ENCODE measurements at regions of chr5 and their contacts with region 1.

Region 1: DNA sequence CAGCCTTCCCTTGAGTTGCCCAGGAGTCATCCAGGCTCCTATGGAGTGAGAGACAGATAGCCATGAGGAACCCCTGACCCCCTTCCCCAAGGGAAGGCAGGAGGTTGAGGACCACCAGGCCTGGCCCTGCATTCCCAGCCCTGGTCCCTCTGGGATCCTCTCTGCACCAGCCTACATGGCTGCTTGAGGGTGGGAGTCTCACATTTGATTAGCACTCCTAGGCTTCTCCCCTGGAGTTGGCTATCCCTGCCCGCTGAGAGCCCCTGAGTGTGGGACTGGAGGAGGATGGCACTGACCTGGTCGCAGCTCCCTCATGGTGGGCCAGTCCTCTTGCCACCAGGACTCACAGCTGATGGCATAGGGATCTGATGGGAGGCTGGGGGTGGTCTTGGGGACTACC is 46.7 kb downstream of the SAR1B start:
- DNase-seq: no peak
- H3K4me3 ChIP-seq: no peak overlapping the region
- H3K27ac ChIP-seq: no peak overlapping the region
- H3K4me1 ChIP-seq: peaks cover 5 to 25% (median 9%) of the 10 kb centered on the region in 6 donors
- H3K27me3 ChIP-seq: no peaks in the 10 kb centered on the region
- CTCF ChIP-seq: no peak
- POLR2A ChIP-seq: no peak

Region 2: DNA sequence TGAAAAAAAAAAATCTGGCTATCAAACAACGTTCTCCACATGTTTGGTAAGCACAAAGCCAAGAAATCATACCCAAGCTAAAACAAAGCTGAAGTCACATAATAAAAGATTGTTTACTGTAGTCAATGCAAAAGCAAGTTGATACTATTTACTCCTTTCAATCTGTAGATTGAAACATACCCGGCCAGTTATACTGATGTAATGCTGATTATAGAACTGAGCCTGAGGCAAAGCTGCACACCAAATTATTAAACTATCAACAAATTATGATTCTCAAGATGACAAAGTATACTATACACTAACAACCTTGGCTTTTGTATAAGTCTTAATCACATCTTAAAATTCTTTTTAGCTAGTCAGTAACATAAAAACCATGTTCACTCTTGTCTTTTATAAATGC is 363.4 kb before region 1 on chr5:
- intact Hi-C with region 1: no loop called
- DNase-seq: no peak
- H3K4me3 ChIP-seq: peak overlapping the region in 2 of 8 donors; percentile 5 to 81
- H3K27ac ChIP-seq: peak overlapping the region in 3 of 8 donors; percentile 8 to 24 (median 13)
- H3K4me1 ChIP-seq: peaks cover 65 to 87% (median 84%) of the 10 kb centered on the region in 6 donors
- H3K27me3 ChIP-seq: no peaks in the 10 kb centered on the region
- CTCF ChIP-seq: no peak
- POLR2A ChIP-seq: no peak

Region 3: GRCh38 chr5:134304311-134304710 is 281.7 kb before region 1 on chr5:
- intact Hi-C with region 1: loop called (anchors 2 kb)
- DNase-seq: no peak
- H3K4me3 ChIP-seq: no peak overlapping the region
- H3K27ac ChIP-seq: no peak overlapping the region
- H3K4me1 ChIP-seq: peaks cover 0 to 4% (median 2%) of the 10 kb centered on the region in 6 donors
- H3K27me3 ChIP-seq: no peaks in the 10 kb centered on the region
- CTCF ChIP-seq: no peak
- POLR2A ChIP-seq: no peak

Measured in spleen (tissue), 13 donors.